ENCODE measurements at regions of chr1 and their contacts with region 1.

Region 1: GRCh38 chr1:210332719-210333398 is 4.2 kb downstream of the HHAT start:
- DNase-seq: peak; percentile 81
- ATAC-seq: peak; percentile 34
- H3K4me3 Mint-ChIP-seq: peak overlapping the region; percentile 29
- H3K27ac Mint-ChIP-seq: peak overlapping the region; percentile 65
- H3K4me1 Mint-ChIP-seq: peaks cover 42% of the 10 kb centered on the region
- H3K27me3 Mint-ChIP-seq: no peaks in the 10 kb centered on the region

Region 2: GRCh38 chr1:210342986-210343780 is 10.3 kb after region 1 on chr1:
- CTCF ChIA-PET with region 1: interaction called, 26 read pairs
- POLR2A ChIA-PET with region 1: interaction called, 6 read pairs
- DNase-seq: no peak
- ATAC-seq: no peak
- H3K4me3 Mint-ChIP-seq: no peak overlapping the region
- H3K27ac Mint-ChIP-seq: no peak overlapping the region
- H3K4me1 Mint-ChIP-seq: peaks cover 33% of the 10 kb centered on the region
- H3K27me3 Mint-ChIP-seq: no peaks in the 10 kb centered on the region

Region 3: GRCh38 chr1:210360852-210361477 is 28.1 kb after region 1 on chr1:
- CTCF ChIA-PET with region 1: interaction called, 15 read pairs
- POLR2A ChIA-PET with region 1: no interaction called
- DNase-seq: no peak
- ATAC-seq: peak; percentile 69
- H3K4me3 Mint-ChIP-seq: no peak overlapping the region
- H3K27ac Mint-ChIP-seq: no peak overlapping the region
- H3K4me1 Mint-ChIP-seq: no peaks in the 10 kb centered on the region
- H3K27me3 Mint-ChIP-seq: peaks cover 7% of the 10 kb centered on the region

Region 4: DNA sequence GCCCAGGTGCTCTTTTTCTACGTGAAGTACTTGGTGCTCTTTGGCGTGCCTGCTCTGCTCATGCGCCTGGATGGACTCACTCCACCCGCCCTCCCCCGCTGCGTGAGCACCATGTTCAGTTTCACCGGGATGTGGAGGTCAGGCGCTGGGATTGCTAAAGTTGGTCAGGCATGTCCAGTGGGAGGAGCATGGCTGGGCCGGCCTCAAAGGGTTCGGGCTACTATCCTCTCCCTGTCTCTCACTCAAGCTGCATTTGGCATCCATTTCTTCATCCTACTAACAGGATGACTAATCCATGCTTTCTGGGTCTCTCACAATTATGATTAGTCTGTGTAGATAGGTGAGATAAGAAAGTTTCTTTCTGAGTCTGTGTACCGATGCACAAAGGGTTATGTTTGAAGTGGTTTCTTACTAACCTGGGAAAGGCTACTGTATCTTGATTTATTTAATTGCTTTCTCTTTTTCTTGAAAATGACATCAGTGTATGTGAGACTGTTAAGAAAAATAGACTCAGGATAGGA is 131.7 kb after region 1 on chr1:
- CTCF ChIA-PET with region 1: no interaction called
- POLR2A ChIA-PET with region 1: no interaction called
- DNase-seq: no peak
- ATAC-seq: peak; percentile 71
- H3K4me3 Mint-ChIP-seq: no peak overlapping the region
- H3K27ac Mint-ChIP-seq: no peak overlapping the region
- H3K4me1 Mint-ChIP-seq: peaks cover 18% of the 10 kb centered on the region
- H3K27me3 Mint-ChIP-seq: peaks cover 2% of the 10 kb centered on the region